ENCODE measurements at regions of chr5 and their contacts with region 1.

Region 1: DNA sequence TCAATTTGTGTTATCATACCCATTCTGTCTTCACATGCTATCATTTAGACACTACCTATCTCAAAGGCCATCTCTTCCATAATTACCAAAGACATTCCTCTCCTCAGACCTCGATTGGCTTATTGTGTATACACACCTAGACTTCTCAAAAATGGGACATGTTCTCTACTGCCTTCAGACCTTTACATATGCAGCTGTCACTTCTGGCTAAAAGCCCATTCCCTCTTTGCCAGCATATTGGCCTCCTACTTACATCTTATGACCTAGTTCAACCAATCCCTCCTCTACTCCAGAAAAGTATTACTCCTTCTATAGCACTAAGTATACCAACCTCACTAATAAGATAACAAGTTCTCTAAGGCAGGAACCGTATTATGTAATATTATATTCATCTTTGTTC is 84.4 kb downstream of the RAPGEF6 start:
- DNase-seq: no peak
- ATAC-seq: no peak
- H3K4me3 ChIP-seq: no peak overlapping the region
- H3K4me3 Mint-ChIP-seq: no peak overlapping the region
- H3K27ac ChIP-seq: peak overlapping the region in 1 of 2 donors; percentile 17
- H3K27ac Mint-ChIP-seq: peak overlapping the region; percentile 37
- H3K4me1 ChIP-seq: peaks cover 17 to 37% of the 10 kb centered on the region in 2 donors
- H3K4me1 Mint-ChIP-seq: peaks cover 54% of the 10 kb centered on the region
- H3K27me3 ChIP-seq: no peaks in the 10 kb centered on the region
- H3K27me3 Mint-ChIP-seq: no peaks in the 10 kb centered on the region
- CTCF ChIP-seq: no peak

Region 2: DNA sequence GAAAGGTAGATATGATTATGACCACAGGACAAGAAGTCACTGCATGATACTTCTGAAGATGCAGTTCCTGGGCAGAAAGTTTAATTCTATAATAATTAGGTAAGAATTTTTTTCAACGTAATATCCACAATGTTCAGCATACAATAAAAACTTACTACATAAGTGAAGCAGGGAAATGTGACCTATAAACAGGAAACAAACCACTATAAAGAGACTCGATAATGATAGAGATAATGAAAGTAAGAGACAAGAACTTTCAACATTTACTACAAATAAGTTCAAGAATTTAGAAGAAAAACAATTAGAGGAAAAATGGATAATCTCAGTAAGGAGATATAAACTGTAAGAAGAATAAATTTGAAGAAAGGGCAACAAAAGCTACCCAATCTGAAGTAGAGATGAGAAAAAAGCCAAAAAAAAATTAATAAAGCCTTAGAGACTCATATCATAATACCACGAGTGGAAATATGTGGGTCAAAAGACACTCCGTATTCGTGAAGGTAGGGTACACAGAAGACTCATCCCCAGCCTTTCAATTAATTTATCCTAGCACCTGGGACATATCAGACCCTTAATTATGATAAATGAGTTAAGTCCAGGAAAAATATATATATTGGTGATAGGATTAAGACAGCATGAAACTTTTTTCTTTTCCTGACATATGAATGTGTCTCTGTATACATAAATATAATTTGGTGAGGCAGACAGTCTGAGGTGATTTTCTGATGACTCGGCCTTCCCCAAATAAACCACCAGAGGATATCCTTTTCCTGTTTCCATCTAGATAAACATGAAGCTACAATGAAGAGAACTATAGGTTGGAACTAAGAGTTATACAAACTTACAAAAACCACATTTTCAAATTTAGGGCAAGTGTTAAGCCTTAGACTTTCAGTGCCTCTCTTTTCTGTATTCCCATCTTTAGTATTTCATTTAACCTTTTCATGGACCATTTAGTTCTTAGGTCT is 36.0 kb before region 1 on chr5:
- CTCF ChIA-PET with region 1: no interaction called
- POLR2A ChIA-PET with region 1: no interaction called
- intact Hi-C with region 1: loop called (anchors 5 kb)
- DNase-seq: peak; percentile 52
- ATAC-seq: peak; percentile 41
- H3K4me3 ChIP-seq: peak overlapping the region in 1 of 5 experiments; percentile 44
- H3K4me3 Mint-ChIP-seq: peak overlapping the region; percentile 58
- H3K27ac ChIP-seq: peak overlapping the region in 1 of 2 donors; percentile 69
- H3K27ac Mint-ChIP-seq: peak overlapping the region; percentile 34
- H3K4me1 ChIP-seq: peaks cover 16 to 17% of the 10 kb centered on the region in 2 donors
- H3K4me1 Mint-ChIP-seq: peaks cover 24% of the 10 kb centered on the region
- H3K27me3 ChIP-seq: no peaks in the 10 kb centered on the region
- H3K27me3 Mint-ChIP-seq: no peaks in the 10 kb centered on the region
- CTCF ChIP-seq: peak; percentile 27

Region 3: DNA sequence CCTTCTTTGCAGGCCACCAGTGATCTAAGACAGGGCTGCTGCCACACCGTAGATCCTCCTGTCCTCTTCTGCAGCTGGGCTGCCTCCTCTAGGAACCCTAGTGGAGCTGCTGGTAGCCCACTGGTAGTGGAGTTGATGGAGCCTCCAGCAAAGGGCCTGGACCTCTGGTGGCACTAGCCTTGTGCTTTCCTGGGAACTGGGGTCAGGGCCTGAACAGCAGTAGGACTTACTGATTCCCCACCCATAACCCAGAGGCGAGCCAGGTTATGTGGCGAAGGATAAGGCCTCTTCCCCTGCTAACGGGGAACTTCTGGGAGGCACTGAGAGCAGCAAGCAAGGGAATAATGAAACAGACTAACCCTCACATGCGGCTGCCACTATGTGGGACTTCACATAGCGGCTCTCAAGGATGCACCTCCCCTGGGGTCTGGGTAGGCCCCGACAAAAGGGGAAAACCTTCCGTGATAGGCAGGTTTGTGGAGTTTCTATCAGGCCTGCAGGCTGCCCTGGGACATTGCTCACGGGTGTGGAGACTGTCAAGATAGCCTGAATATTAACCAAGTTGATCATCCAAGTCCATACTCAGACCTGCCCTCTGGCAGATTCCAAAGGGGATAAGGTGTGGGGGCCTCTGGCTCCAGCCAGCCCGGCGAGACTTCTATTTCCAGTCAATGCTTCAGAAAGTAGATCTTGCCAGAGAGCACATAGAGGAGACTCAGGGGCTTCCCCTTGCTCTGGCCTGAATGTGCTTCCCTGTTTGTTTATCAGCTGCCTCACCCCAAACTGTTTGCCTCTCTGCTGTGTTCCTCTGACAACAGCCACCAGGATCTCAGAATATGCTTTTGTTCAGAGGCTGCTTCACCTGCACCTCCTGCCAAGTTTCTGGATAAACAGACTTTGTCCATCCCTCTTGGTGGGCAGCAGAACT is 751.0 kb after region 1 on chr5:
- CTCF ChIA-PET with region 1: no interaction called
- POLR2A ChIA-PET with region 1: no interaction called
- intact Hi-C with region 1: no loop called
- DNase-seq: no peak
- ATAC-seq: no peak
- H3K4me3 ChIP-seq: no peak overlapping the region
- H3K4me3 Mint-ChIP-seq: no peak overlapping the region
- H3K27ac ChIP-seq: no peak overlapping the region
- H3K27ac Mint-ChIP-seq: no peak overlapping the region
- H3K4me1 ChIP-seq: no peaks in the 10 kb centered on the region
- H3K4me1 Mint-ChIP-seq: no peaks in the 10 kb centered on the region
- H3K27me3 ChIP-seq: peaks cover 0 to 2% (median 0%) of the 10 kb centered on the region in 4 experiments
- H3K27me3 Mint-ChIP-seq: peaks cover 5% of the 10 kb centered on the region
- CTCF ChIP-seq: no peak

Measured in B cell (primary cell).